Activated B cell treated with CpG ODN at 0.5 μM for 24 hours (primary cell): ENCODE measurements at regions of chr16 and their contacts with region 1.

Region 1: DNA sequence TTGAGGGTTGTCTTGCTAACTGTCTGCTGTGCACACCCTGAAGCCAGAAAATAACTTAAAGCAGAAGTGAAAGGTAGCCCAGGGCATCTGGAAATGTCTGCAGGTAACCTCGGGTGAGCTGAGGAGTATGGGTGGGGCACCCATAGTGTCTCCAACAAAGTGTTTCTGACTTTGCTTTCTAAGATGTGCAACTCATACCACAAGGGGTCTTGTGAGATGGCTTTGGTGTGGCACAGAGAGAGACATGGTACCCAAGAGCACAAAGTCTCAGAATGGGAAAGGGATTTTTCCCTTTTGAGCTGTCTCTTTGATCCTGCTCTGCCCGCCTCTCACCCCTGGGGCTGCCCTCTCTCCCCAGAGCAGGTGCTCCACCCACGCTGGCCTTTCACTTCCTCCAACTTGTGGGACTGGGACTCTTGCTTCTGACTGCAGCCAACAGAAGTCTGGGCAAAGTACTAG is 6.9 kb downstream of the CHD9 start:
- DNase-seq: peak; percentile 65
- ATAC-seq: peak; percentile 82
- H3K4me3 Mint-ChIP-seq: peak overlapping the region; percentile 65
- H3K27ac Mint-ChIP-seq: peak overlapping the region; percentile 82
- H3K4me1 Mint-ChIP-seq: peaks cover 88% of the 10 kb centered on the region
- H3K27me3 Mint-ChIP-seq: no peaks in the 10 kb centered on the region
- CTCF ChIP-seq: no peak

Region 2: DNA sequence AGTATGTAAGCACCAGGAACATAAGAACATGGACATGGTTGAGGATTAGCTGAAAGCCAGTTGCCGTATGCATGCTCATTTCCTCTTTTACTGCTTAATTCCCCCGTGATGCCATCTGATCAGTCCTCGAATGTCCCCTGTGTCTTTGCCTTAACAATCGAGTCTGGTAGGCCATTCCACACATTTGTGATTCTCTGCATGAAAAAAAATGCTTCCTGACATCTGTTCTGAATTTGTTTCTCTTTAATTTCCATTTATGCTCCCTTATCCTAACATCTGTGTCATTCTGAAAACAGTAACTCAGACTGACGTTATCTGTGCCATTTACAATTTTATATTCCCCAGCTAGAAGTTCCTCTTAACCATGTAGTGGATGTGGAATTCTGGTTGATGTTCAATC is 356.6 kb before region 1 on chr16:
- CTCF ChIA-PET with region 1: no interaction called
- POLR2A ChIA-PET with region 1: no interaction called
- intact Hi-C with region 1: no loop called
- DNase-seq: no peak
- ATAC-seq: no peak
- H3K4me3 Mint-ChIP-seq: no peak overlapping the region
- H3K27ac Mint-ChIP-seq: no peak overlapping the region
- H3K4me1 Mint-ChIP-seq: no peaks in the 10 kb centered on the region
- H3K27me3 Mint-ChIP-seq: no peaks in the 10 kb centered on the region
- CTCF ChIP-seq: no peak

Region 3: GRCh38 chr16:53071748-53072301 is 10.1 kb after region 1 on chr16:
- CTCF ChIA-PET with region 1: no interaction called
- POLR2A ChIA-PET with region 1: interaction called, 4 read pairs
- intact Hi-C with region 1: loop called (anchors 1 kb)
- DNase-seq: no peak
- ATAC-seq: peak; percentile 29
- H3K4me3 Mint-ChIP-seq: peak overlapping the region; percentile 46
- H3K27ac Mint-ChIP-seq: peak overlapping the region; percentile 81
- H3K4me1 Mint-ChIP-seq: peaks cover 79% of the 10 kb centered on the region
- H3K27me3 Mint-ChIP-seq: no peaks in the 10 kb centered on the region
- CTCF ChIP-seq: no peak

Region 4: GRCh38 chr16:53091466-53092211 is 29.9 kb after region 1 on chr16:
- CTCF ChIA-PET with region 1: no interaction called
- POLR2A ChIA-PET with region 1: interaction called, 9 read pairs
- intact Hi-C with region 1: loop called (anchors 1 kb)
- DNase-seq: peak; percentile 26
- ATAC-seq: peak; percentile 79
- H3K4me3 Mint-ChIP-seq: peak overlapping the region; percentile 79
- H3K27ac Mint-ChIP-seq: peak overlapping the region; percentile 87
- H3K4me1 Mint-ChIP-seq: peaks cover 77% of the 10 kb centered on the region
- H3K27me3 Mint-ChIP-seq: no peaks in the 10 kb centered on the region
- CTCF ChIP-seq: no peak

Region 5: DNA sequence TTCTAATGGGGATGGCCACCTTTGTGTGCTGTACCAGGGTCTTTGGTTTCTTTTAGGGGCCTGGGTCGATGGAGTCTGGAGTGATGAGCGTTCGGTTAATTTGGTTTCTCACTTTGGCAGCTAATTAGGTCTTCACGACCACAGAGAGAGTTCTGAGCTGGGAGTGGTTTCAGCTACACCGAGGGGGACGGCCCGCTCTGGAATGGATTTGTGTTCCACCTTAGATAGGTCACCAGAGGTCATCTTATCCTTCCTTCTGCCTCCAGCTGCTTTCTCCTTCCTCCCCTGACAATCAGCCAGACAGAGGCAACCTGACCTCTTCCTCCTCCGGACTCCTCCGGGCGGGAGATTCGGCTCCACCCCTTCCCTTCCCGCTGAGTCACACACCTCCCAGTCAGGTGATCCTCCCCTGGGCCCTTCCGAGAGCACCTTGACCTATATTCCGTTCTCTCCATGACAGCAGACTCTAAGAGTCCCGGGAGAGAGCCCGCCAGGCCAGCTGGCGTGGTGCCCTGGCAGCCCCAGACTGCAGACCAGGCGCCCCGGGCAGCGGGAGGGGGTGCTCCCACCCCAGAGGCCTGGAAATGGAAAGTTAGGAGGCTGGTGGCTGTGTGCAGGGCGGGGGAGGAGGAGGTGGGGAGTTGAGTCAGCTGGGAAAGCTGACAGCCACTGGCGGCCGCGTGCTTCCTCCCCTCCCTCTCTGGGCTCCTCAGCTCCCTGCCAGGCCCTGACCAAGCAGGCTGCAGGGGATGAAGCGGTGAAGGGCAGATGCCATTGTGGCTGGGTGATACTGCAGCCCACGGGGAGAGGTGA is 37.8 kb after region 1 on chr16:
- CTCF ChIA-PET with region 1: interaction called, 45 read pairs
- POLR2A ChIA-PET with region 1: interaction called, 30 read pairs
- intact Hi-C with region 1: loop called (anchors 1 kb)
- DNase-seq: peak; percentile 43
- ATAC-seq: peak; percentile 43
- H3K4me3 Mint-ChIP-seq: peak overlapping the region; percentile 83
- H3K27ac Mint-ChIP-seq: peak overlapping the region; percentile 93
- H3K4me1 Mint-ChIP-seq: peaks cover 69% of the 10 kb centered on the region
- H3K27me3 Mint-ChIP-seq: no peaks in the 10 kb centered on the region
- CTCF ChIP-seq: no peak